Natural killer cell (primary cell): ENCODE measurements at regions of chr12 and their contacts with region 1.

Region 1: DNA sequence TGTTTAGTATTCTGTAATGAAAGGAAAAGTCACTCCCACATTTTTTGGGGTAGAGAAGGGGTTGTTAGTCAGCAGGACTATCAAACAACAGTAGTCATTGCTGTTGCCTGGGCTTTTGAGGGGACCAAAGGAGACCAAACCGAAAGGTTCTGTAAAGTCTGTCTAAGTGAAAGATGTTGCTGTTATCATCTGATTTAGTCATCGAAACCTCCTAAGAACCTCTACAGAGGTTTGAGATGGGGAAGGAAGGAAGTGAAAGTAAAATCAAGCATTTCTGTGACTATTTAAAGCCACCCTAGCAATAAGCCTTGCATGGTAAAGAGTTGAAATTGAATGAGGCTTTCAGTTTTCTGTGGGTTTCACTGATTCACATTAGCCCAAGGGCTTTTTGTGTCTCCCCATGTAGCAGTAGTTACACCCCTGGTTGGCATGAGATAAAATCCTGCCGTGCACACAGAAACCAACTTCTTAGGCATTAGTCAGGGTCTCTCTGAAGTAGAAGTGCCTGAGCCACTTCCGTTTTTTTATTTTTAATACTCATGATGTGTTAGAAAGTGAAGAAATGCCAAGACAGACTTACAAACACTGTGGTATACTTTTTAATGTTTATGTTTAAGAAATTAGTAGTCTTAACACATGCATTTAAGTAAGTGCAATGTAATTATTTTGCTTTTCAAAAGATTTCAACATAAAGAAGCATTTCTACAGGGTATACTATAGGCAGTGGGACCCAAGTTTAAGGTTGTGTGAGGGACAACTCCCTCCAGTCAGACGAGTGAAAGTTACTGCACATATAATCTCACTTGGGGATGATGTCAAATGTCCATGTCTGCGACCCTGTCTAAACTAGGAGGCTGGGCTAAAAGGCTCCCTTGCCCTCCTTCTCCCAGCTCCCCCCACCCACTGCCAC is 50.4 kb downstream of the DYRK2 start:
- DNase-seq: peak; percentile 31 to 67
- ATAC-seq: peak; percentile 84 to 87 (median 85)
- H3K4me3 ChIP-seq: peak overlapping the region; percentile 38
- H3K4me3 Mint-ChIP-seq: peak overlapping the region; percentile 84
- H3K27ac ChIP-seq: peak overlapping the region; percentile 63
- H3K27ac Mint-ChIP-seq: peak overlapping the region; percentile 87 to 90
- H3K4me1 ChIP-seq: peaks cover 12% of the 10 kb centered on the region
- H3K4me1 Mint-ChIP-seq: peaks cover 24 to 32% of the 10 kb centered on the region in 2 donors
- H3K27me3 ChIP-seq: no peaks in the 10 kb centered on the region
- H3K27me3 Mint-ChIP-seq: no peaks in the 10 kb centered on the region
- CTCF ChIP-seq: no peak

Region 2: DNA sequence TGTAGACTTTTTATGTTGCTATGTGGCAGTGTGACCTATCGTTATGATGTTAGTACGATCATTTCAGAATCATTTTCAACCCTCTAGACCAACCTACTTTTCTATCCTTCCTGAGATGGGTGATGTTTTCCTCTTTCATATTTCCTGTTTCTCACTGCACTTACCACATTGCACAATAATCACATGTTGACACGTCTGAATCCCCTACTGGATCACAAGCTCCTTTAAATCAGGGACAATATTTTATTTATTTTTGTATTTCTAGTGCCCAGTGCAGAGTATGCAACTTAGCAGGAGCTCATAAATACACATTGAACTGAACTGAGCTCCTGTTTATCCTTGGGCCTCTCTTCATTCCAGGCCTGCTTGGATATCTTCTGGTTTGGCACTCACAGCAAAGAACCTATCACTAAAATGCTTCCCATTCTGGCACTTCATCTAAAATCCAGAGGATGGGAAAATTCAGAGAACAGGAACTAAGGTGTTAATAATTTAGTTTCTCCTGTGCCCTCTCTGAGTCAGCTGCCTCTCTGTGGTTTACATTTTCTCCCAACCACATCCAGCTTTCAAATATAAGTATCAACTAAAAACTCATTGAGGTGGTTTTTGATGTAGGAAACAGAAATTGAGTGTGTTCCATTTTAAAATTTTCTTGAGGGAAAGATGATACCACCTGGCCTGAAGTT is 119.8 kb before region 1 on chr12:
- intact Hi-C with region 1: loop called (anchors 10 kb)
- DNase-seq: peak in 1 of 2 donors; percentile 65
- ATAC-seq: peak; percentile 67 to 73 (median 72)
- H3K4me3 ChIP-seq: no peak overlapping the region
- H3K4me3 Mint-ChIP-seq: peak overlapping the region; percentile 84
- H3K27ac ChIP-seq: peak overlapping the region; percentile 51
- H3K27ac Mint-ChIP-seq: peak overlapping the region; percentile 91 to 94
- H3K4me1 ChIP-seq: peaks cover 8% of the 10 kb centered on the region
- H3K4me1 Mint-ChIP-seq: peaks cover 44 to 48% of the 10 kb centered on the region in 2 donors
- H3K27me3 ChIP-seq: no peaks in the 10 kb centered on the region
- H3K27me3 Mint-ChIP-seq: no peaks in the 10 kb centered on the region
- CTCF ChIP-seq: no peak